Naive thymus-derived CD4-positive, alpha-beta T cell (primary cell): ENCODE measurements at regions of chr3 and their contacts with region 1.

Region 1: DNA sequence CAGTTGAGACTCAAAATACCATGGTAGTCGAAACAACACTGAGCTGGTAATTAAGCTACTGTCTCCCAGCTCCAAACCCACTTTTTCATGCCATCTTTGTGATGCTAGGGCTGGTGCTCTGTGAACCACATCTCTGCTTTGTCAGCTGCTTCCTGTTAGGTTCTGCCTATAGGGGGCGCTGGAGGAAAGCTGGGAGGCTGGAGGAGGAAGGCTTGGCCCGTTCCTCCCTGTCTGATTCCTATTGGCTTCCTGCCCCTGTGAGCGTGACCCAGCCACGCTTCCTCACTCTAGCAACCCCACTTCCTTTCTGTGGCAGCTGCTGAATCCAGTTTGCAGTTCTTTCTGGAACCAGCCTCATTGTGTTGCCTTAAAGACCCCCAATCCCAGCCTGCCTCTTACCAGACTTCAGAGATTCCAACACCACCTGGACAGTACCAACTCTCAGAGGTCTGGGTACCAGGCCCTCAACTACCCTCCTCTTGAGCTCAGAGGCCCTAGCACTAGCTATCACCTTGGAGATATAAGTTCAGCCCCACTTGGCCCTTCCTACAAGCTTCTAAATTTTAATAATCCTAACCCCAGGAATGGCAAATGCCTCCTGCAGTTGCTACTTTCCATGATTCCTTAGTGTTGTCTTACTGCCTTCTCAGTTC is 120.9 kb downstream of the ERC2 start:
- DNase-seq: peak in 1 of 9 donors; percentile 26
- ATAC-seq: no peak
- H3K4me3 ChIP-seq: no peak overlapping the region
- H3K4me3 Mint-ChIP-seq: no peak overlapping the region
- H3K27ac ChIP-seq: no peak overlapping the region
- H3K27ac Mint-ChIP-seq: no peak overlapping the region
- H3K4me1 ChIP-seq: no peaks in the 10 kb centered on the region
- H3K4me1 Mint-ChIP-seq: peaks cover 0 to 4% (median 0%) of the 10 kb centered on the region in 7 donors
- H3K27me3 ChIP-seq: no peaks in the 10 kb centered on the region
- H3K27me3 Mint-ChIP-seq: peaks cover 0 to 18% (median 8%) of the 10 kb centered on the region in 5 donors

Region 2: DNA sequence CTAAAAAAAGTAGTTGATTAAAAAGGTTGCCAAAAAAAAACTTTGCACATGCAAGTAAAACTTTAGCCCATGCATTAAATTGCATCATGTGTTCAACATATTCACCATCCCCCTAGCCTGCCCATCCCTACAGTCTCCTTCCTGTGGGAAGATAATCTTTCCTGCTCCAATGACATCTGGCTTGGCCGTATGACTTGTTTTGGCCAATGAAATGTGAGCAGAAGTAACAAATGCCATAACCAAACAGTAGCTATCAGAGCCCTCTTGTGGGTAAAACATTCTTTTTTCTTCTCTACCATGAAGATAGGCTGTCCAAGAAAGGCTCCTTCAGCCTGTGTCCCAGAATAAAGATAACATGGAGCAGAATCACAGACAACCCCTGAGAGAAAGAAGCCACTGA is 105.7 kb after region 1 on chr3:
- CTCF ChIA-PET with region 1: no interaction called
- POLR2A ChIA-PET with region 1: no interaction called
- intact Hi-C with region 1: loop called in 1 of 2 experiments (anchors 5 kb)
- DNase-seq: no peak
- ATAC-seq: no peak
- H3K4me3 ChIP-seq: no peak overlapping the region
- H3K4me3 Mint-ChIP-seq: no peak overlapping the region
- H3K27ac ChIP-seq: no peak overlapping the region
- H3K27ac Mint-ChIP-seq: no peak overlapping the region
- H3K4me1 ChIP-seq: no peaks in the 10 kb centered on the region
- H3K4me1 Mint-ChIP-seq: no peaks in the 10 kb centered on the region
- H3K27me3 ChIP-seq: no peaks in the 10 kb centered on the region
- H3K27me3 Mint-ChIP-seq: peaks cover 12 to 52% (median 48%) of the 10 kb centered on the region in 5 donors

Region 3: DNA sequence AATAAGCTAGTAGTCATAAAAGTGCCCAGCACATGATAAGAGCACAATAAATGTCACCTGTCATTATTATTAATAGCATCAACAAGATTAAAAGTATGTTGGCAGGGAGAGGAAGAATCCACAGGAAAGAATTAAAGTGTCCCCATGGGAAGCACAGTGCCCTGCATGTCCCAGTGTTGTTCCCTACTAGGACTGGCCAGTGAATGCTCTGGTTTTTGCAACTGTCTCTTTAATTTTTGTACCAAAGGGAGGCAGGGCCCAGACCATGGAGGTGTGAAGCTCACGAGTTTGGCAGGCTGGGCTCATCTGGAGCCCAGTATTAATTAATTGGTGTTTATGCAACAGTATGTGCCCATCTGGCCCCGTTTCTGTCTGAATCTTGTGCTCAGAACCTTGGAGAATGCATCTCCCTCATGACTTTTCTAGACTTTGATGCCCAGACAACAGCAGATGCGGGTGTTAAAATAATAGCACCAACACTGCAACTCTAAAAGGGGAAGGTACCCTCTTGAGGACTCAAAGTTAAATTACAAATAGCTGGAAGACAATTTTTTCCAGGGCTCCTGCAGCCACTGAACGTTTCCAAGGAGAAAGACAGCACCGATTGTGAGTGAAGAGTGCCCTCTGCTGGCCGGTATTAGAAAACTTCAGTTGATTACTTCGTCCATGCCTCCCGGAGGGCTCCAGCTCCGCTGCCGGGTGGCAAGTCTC is 641.3 kb after region 1 on chr3:
- CTCF ChIA-PET with region 1: no interaction called
- POLR2A ChIA-PET with region 1: no interaction called
- intact Hi-C with region 1: loop called in 1 of 2 experiments (anchors 10 kb)
- DNase-seq: peak; percentile 45 to 76 (median 63)
- ATAC-seq: peak; percentile 85
- H3K4me3 ChIP-seq: no peak overlapping the region
- H3K4me3 Mint-ChIP-seq: peak overlapping the region in 5 of 10 donors; percentile 29 to 46 (median 42)
- H3K27ac ChIP-seq: no peak overlapping the region
- H3K27ac Mint-ChIP-seq: peak overlapping the region in 3 of 9 donors; percentile 28 to 81 (median 62)
- H3K4me1 ChIP-seq: peaks cover 3 to 9% of the 10 kb centered on the region in 2 donors
- H3K4me1 Mint-ChIP-seq: peaks cover 5 to 34% (median 18%) of the 10 kb centered on the region in 7 donors
- H3K27me3 ChIP-seq: no peaks in the 10 kb centered on the region
- H3K27me3 Mint-ChIP-seq: peaks cover 0 to 26% (median 5%) of the 10 kb centered on the region in 5 donors